Pancreas (tissue), 10 donors: ENCODE measurements at regions of chr5 and their contacts with region 1.

Region 1: DNA sequence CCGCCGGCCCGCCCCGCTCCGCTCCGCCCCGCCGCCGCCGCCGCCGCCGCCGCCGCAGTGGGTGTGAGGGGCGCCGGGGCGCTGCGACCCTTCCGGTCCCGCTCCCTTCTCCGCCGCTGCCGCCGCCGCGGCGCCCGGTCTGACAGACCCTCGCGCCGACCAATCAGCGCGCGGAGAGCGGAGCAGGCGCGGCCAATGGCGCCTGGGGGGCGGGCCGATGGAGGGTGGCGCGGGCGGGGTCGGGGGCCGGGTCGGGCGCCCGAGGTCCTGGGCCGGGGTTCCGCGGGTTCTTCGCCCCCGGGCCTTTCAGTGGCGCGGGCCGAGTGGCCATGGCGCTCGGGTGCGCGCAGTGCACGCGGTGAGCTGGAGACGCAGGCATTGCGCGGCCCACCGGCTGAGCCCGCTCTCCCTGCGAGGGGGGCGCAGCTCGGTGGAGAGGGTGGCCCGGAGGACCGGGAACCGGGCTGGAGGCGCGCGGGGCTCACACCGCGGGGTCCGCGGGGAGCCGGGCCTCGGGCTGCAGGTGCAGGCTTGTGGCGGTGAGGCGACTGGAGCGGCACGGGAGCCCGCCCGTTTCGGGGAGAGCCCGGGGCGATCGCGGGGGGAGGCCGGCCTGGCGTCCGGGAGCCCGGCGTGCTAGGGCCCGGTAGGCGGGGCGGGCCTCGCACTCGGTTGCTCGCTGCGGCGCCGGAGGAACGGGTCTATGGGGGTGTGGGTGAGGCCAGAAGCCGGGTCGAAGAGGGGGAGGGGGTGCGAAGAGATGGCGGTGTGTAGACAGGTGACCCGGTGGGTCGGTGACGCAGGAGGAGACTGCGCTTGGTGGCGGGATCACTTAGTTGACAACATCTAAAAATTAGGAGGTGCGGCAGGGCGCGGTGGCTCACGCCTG is at the start of gene MAPK9:
- DNase-seq: peak; percentile 84 to 95 (median 88)
- ATAC-seq: peak; percentile 75 to 84 (median 82)
- H3K4me3 ChIP-seq: peak within 1 kb of the TSS; percentile 78 to 100 (median 91)
- H3K27ac ChIP-seq: peak within 1 kb of the TSS; percentile 83 to 90 (median 88)
- H3K4me1 ChIP-seq: peaks cover 14 to 33% (median 15%) of the 10 kb centered on the region in 3 donors
- H3K27me3 ChIP-seq: no peaks in the 10 kb centered on the region
- CTCF ChIP-seq: no peak
- total RNA-seq, gene MAPK9: 25.9 to 40.3 (median 30.6) TPM

Region 2: DNA sequence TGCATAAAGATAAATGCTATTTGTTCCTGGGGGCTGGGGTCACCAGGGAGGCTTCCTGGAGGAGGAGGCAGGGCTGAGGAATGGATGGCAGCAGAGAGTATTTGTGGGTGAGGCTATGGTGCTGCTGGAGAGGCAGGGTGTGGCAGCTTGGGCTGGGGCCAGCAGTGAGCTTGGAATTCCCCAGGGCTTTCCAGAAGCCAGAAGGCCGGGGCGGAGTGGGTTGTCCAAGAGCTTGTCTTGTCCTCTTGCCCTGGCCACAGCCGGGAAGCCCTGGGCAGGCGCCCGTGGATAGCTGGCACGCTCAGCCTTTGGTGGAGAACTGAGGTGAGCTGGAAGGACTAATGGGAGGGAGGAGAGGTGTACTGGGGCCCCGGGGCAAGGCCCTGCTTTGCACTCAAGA is 174.9 kb after region 1 on chr5:
- intact Hi-C with region 1: loop called in 1 of 3 experiments (anchors 5 kb)
- DNase-seq: peak in 3 of 6 donors; percentile 35 to 63 (median 40)
- ATAC-seq: peak in 3 of 4 donors; percentile 42 to 79 (median 59)
- H3K4me3 ChIP-seq: no peak overlapping the region
- H3K27ac ChIP-seq: no peak overlapping the region
- H3K4me1 ChIP-seq: no peaks in the 10 kb centered on the region
- H3K27me3 ChIP-seq: no peaks in the 10 kb centered on the region
- CTCF ChIP-seq: no peak